Heart left ventricle (tissue), 16 donors: ENCODE measurements at regions of chr18 and their contacts with region 1.

Region 1: DNA sequence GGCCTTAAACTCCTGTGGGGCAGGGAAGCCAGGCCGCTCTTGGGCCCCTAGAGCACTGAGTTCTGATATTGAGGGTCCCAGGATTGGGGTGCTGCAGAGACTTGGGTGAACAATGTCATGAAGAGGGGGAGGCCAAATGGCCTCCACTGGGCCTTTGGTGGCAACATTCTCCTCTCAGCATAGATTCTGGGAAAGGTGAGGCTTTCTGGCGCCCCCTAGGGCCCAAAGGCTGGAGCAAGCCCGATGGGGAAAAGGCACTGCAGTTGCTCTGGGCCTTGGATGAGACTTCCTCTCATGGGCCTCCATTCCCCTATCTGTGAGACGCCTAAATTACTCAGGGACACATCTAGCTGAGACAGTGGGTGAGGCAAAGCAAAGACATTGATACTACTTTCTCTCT is 84.8 kb downstream of the ACAA2 start:
- DNase-seq: peak in 2 of 5 donors; percentile 32 to 68
- ATAC-seq: no peak
- H3K4me3 ChIP-seq: no peak overlapping the region
- H3K27ac ChIP-seq: no peak overlapping the region
- H3K4me1 ChIP-seq: peaks cover 0 to 42% (median 6%) of the 10 kb centered on the region in 12 donors
- H3K27me3 ChIP-seq: no peaks in the 10 kb centered on the region
- CTCF ChIP-seq: peak; percentile 18 to 64 (median 46)
- POLR2A ChIP-seq: no peak

Region 2: GRCh38 chr18:49597157-49597931 is 131.2 kb before region 1 on chr18:
- intact Hi-C with region 1: loop called in 1 of 10 experiments (anchors 10 kb)
- DNase-seq: no peak
- ATAC-seq: no peak
- H3K4me3 ChIP-seq: no peak overlapping the region
- H3K27ac ChIP-seq: no peak overlapping the region
- H3K4me1 ChIP-seq: no peaks in the 10 kb centered on the region
- H3K27me3 ChIP-seq: peaks cover 0 to 15% (median 0%) of the 10 kb centered on the region in 9 donors
- CTCF ChIP-seq: no peak
- POLR2A ChIP-seq: no peak

Region 3: GRCh38 chr18:49878567-49879270 is 150.2 kb after region 1 on chr18:
- intact Hi-C with region 1: no loop called
- DNase-seq: no peak
- ATAC-seq: no peak
- H3K4me3 ChIP-seq: no peak overlapping the region
- H3K27ac ChIP-seq: no peak overlapping the region
- H3K4me1 ChIP-seq: no peaks in the 10 kb centered on the region
- H3K27me3 ChIP-seq: peaks cover 0 to 8% (median 0%) of the 10 kb centered on the region in 9 donors
- CTCF ChIP-seq: no peak
- POLR2A ChIP-seq: no peak